ENCODE measurements at regions of chr19 and their contacts with region 1.

Region 1: GRCh38 chr19:39970675-39971379 is at the start of gene PSMC4:
- DNase-seq: peak; percentile 94 to 99 (median 98)
- ATAC-seq: peak; percentile 98
- H3K4me3 ChIP-seq: peak within 1 kb of the TSS; percentile 88
- H3K4me3 Mint-ChIP-seq: peak within 1 kb of the TSS; percentile 92 to 100 (median 94)
- H3K27ac ChIP-seq: peak within 1 kb of the TSS; percentile 95
- H3K27ac Mint-ChIP-seq: peak within 1 kb of the TSS; percentile 95 to 99 (median 97)
- H3K4me1 ChIP-seq: peaks cover 27 to 32% of the 10 kb centered on the region in 2 donors
- H3K4me1 Mint-ChIP-seq: peaks cover 39 to 61% (median 53%) of the 10 kb centered on the region in 7 donors
- H3K27me3 ChIP-seq: no peaks in the 10 kb centered on the region
- H3K27me3 Mint-ChIP-seq: no peaks in the 10 kb centered on the region
- total RNA-seq, gene PSMC4: 48.7 to 146 (median 69.1) TPM

Region 2: DNA sequence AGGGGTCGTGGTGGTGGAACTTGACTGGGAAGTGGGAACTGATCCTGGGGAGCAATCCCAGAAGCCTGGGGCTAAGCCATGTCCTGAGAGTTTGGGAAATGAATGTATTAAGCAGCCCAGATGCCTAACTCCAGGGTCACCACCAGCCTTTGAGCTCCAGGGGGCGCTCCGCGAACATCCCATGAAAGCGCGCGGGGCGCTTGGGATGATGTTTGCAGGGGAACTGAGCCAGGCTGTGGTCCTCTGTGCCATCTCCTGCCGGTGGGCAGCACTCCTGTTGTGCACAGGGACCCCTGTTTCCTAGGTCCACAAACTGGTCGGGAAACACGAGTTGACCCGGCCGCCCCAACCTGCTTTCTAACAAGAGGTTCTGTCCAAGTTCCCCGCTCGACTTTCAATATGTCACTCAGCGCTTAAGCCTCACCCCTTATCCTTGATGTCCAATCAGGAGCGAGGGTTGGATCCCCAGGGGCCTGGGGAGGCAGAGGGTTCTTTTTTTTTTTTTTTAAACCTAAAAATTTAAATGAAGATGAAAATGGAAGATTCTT is 177.8 kb before region 1 on chr19:
- CTCF ChIA-PET with region 1: interaction called, 10 read pairs
- POLR2A ChIA-PET with region 1: no interaction called
- intact Hi-C with region 1: loop called (anchors 1 to 2 kb)
- DNase-seq: peak; percentile 56 to 80 (median 72)
- ATAC-seq: peak; percentile 94
- H3K4me3 ChIP-seq: peak overlapping the region; percentile 74
- H3K4me3 Mint-ChIP-seq: peak overlapping the region; percentile 58 to 84 (median 80)
- H3K27ac ChIP-seq: no peak overlapping the region
- H3K27ac Mint-ChIP-seq: no peak overlapping the region
- H3K4me1 ChIP-seq: no peaks in the 10 kb centered on the region
- H3K4me1 Mint-ChIP-seq: peaks cover 0 to 7% (median 0%) of the 10 kb centered on the region in 7 donors
- H3K27me3 ChIP-seq: no peaks in the 10 kb centered on the region
- H3K27me3 Mint-ChIP-seq: peaks cover 0 to 18% (median 2%) of the 10 kb centered on the region in 5 donors

Region 3: GRCh38 chr19:39846176-39846677 is 124.6 kb before region 1 on chr19 and contains the start of gene FBL:
- CTCF ChIA-PET with region 1: interaction called, 12 read pairs
- POLR2A ChIA-PET with region 1: interaction called, 14 read pairs
- intact Hi-C with region 1: loop called in 1 of 2 experiments (anchors 1 kb)
- DNase-seq: peak; percentile 93 to 99 (median 97)
- ATAC-seq: peak; percentile 95
- H3K4me3 ChIP-seq: peak within 1 kb of the TSS; percentile 95
- H3K4me3 Mint-ChIP-seq: peak within 1 kb of the TSS; percentile 82 to 95 (median 92)
- H3K27ac ChIP-seq: peak within 1 kb of the TSS; percentile 94
- H3K27ac Mint-ChIP-seq: peak within 1 kb of the TSS; percentile 86 to 99 (median 95)
- H3K4me1 ChIP-seq: peaks cover 13 to 43% of the 10 kb centered on the region in 2 donors
- H3K4me1 Mint-ChIP-seq: peaks cover 38 to 55% (median 45%) of the 10 kb centered on the region in 7 donors
- H3K27me3 ChIP-seq: no peaks in the 10 kb centered on the region
- H3K27me3 Mint-ChIP-seq: peaks cover 0 to under 1% (median 0%) of the 10 kb centered on the region in 5 donors
- total RNA-seq, gene FBL: 237 to 387 (median 369) TPM

Region 4: GRCh38 chr19:39913682-39914333 is 57.0 kb before region 1 on chr19:
- CTCF ChIA-PET with region 1: interaction called, 8 read pairs
- POLR2A ChIA-PET with region 1: interaction called, 14 read pairs
- intact Hi-C with region 1: loop called in 1 of 2 experiments (anchors 5 kb)
- DNase-seq: no peak
- ATAC-seq: no peak
- H3K4me3 ChIP-seq: no peak overlapping the region
- H3K4me3 Mint-ChIP-seq: no peak overlapping the region
- H3K27ac ChIP-seq: no peak overlapping the region
- H3K27ac Mint-ChIP-seq: no peak overlapping the region
- H3K4me1 ChIP-seq: peaks cover 0 to 4% of the 10 kb centered on the region in 2 donors
- H3K4me1 Mint-ChIP-seq: peaks cover 0 to 20% (median 13%) of the 10 kb centered on the region in 7 donors
- H3K27me3 ChIP-seq: no peaks in the 10 kb centered on the region
- H3K27me3 Mint-ChIP-seq: no peaks in the 10 kb centered on the region

Region 5: GRCh38 chr19:39951686-39952085 is 19.1 kb before region 1 on chr19:
- CTCF ChIA-PET with region 1: interaction called, 50 read pairs
- POLR2A ChIA-PET with region 1: interaction called, 79 read pairs
- intact Hi-C with region 1: loop called in 1 of 2 experiments (anchors 1 kb)
- DNase-seq: peak in 1 of 9 donors; percentile 13
- ATAC-seq: no peak
- H3K4me3 ChIP-seq: no peak overlapping the region
- H3K4me3 Mint-ChIP-seq: peak overlapping the region; percentile 69 to 96 (median 80)
- H3K27ac ChIP-seq: peak overlapping the region; percentile 82
- H3K27ac Mint-ChIP-seq: peak overlapping the region; percentile 84 to 99 (median 95)
- H3K4me1 ChIP-seq: peaks cover 58 to 78% of the 10 kb centered on the region in 2 donors
- H3K4me1 Mint-ChIP-seq: peaks cover 58 to 97% (median 78%) of the 10 kb centered on the region in 7 donors
- H3K27me3 ChIP-seq: no peaks in the 10 kb centered on the region
- H3K27me3 Mint-ChIP-seq: no peaks in the 10 kb centered on the region

Region 6: DNA sequence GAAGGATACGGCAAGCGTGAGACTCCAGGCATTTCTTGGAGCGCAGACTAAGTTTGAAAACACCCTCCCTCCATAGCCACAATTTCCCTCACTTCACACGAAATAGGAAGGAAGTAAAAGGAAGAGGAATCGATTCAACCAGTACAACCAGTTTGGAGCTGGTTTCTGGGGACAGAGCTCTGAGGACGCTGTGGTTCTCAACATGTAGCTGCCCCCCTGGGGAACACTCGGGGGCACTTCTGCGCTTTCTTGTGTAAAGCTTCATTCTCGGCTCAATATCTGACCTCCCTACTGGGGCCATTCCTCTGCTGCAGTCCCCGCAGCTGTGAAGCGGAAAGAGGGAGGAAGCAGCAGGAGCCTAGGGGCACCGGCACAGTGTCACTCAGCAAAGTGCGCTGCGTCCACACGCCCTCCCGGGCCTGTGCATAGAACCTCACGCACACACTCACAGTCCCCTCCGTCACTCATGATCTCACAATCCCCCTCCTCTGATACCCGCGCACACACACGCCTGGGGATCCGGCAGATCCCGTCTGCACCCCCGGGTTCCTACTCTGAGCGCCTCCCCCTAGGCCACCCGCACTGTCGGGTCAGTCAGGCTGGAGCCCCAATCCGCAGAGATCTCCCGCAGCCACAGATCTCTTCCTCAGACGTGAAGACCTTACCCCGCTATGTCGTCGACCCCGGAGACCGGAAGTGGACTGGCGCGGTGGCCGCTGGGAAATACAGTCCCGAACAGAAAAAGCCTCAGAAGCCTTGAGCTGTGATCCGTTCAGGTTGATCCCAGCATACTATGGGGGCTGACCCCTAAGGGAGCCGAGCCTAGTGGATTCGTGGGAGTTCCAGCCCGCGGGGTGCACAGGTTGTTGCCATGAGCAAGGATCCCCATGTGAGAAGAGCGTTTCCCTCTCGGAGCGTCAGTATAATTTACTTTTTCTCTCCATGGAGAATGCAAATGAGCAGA is 119.7 kb after region 1 on chr19 and contains the start of gene ZNF780A:
- CTCF ChIA-PET with region 1: interaction called, 3 read pairs
- POLR2A ChIA-PET with region 1: interaction called, 16 read pairs
- intact Hi-C with region 1: loop called (anchors 1 kb)
- DNase-seq: peak; percentile 59 to 83 (median 81)
- ATAC-seq: peak; percentile 94
- H3K4me3 ChIP-seq: peak within 1 kb of the TSS; percentile 94
- H3K4me3 Mint-ChIP-seq: peak within 1 kb of the TSS; percentile 93 to 100 (median 100)
- H3K27ac ChIP-seq: peak within 1 kb of the TSS; percentile 95
- H3K27ac Mint-ChIP-seq: peak within 1 kb of the TSS; percentile 99 to 100 (median 100)
- H3K4me1 ChIP-seq: peaks cover 16 to 18% of the 10 kb centered on the region in 2 donors
- H3K4me1 Mint-ChIP-seq: peaks cover 33 to 49% (median 44%) of the 10 kb centered on the region in 7 donors
- H3K27me3 ChIP-seq: no peaks in the 10 kb centered on the region
- H3K27me3 Mint-ChIP-seq: peaks cover 8 to 11% (median 9%) of the 10 kb centered on the region in 5 donors
- total RNA-seq, gene ZNF780A: 13.9 to 49.5 (median 22.1) TPM

Region 7: DNA sequence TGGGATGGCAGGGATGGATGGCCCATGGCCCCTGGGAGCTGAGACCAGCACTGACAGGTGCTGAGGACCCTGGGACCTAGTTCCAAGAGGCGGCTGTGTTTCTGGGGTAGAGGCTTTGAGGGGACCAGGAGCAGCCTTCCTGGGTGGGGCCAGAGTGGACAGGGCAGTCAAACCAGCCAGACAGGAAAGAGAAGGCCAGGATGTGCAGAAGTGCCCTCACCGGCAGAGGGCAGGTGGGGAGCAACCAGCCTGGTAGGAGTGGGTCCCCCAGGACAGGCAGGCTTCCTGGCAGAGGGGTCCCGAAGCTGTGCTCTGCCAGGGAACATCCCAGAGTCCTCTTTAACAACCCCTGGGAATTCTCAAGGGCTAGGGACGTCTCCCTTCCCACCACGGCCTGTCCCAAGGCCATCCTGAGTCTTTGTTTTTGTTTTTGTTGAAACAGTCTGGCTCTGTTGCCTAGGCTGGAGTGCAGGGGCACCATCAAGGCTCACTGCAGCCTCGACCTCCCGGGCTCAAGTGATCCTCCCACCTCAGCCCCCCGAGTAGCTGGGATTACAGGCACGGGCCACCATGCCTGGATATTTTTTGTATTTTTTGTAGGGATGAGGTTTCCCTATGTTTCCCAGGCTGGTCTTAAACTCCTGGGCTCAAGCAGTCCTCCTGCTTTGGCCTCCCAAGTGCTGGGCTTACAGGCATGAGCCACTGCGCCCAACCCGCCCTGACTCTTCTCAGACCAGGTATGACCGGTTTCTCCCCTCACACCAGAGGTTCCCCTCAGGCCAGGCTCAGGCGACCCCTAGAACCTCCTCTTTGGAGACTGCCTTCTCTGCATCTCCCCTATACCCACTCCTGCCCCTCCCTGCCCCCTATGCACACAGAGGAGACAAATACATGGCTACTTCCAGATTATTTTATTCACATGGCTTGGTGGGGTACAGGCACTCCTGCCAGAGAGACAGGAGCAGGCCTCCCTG is 422.3 kb after region 1 on chr19:
- CTCF ChIA-PET with region 1: no interaction called
- POLR2A ChIA-PET with region 1: no interaction called
- intact Hi-C with region 1: no loop called
- DNase-seq: no peak
- ATAC-seq: no peak
- H3K4me3 ChIP-seq: no peak overlapping the region
- H3K4me3 Mint-ChIP-seq: no peak overlapping the region
- H3K27ac ChIP-seq: no peak overlapping the region
- H3K27ac Mint-ChIP-seq: no peak overlapping the region
- H3K4me1 ChIP-seq: no peaks in the 10 kb centered on the region
- H3K4me1 Mint-ChIP-seq: peaks cover 0 to 2% (median 0%) of the 10 kb centered on the region in 7 donors
- H3K27me3 ChIP-seq: no peaks in the 10 kb centered on the region
- H3K27me3 Mint-ChIP-seq: no peaks in the 10 kb centered on the region

Measured in naive thymus-derived CD4-positive, alpha-beta T cell (primary cell).